Activated CD4-positive, alpha-beta memory T cell treated with anti-CD3 and anti-CD28 coated beads for 36 hours (primary cell): ENCODE measurements at regions of chr1 and their contacts with region 1.

Region 1: GRCh38 chr1:85576642-85577418 is 3.7 kb upstream of the CCN1 start:
- DNase-seq: peak; percentile 72
- H3K4me3 Mint-ChIP-seq: peak overlapping the region; percentile 60
- H3K27ac Mint-ChIP-seq: no peak overlapping the region
- H3K4me1 Mint-ChIP-seq: peaks cover 33% of the 10 kb centered on the region
- H3K27me3 Mint-ChIP-seq: peaks cover 66% of the 10 kb centered on the region

Region 2: GRCh38 chr1:85464497-85465098 is 112.2 kb before region 1 on chr1:
- CTCF ChIA-PET with region 1: interaction called, 3 read pairs
- POLR2A ChIA-PET with region 1: no interaction called
- intact Hi-C with region 1: loop called (anchors 5 kb)
- DNase-seq: peak; percentile 40
- H3K4me3 Mint-ChIP-seq: peak overlapping the region; percentile 0
- H3K27ac Mint-ChIP-seq: no peak overlapping the region
- H3K4me1 Mint-ChIP-seq: peaks cover 4% of the 10 kb centered on the region
- H3K27me3 Mint-ChIP-seq: peaks cover 40% of the 10 kb centered on the region

Region 3: DNA sequence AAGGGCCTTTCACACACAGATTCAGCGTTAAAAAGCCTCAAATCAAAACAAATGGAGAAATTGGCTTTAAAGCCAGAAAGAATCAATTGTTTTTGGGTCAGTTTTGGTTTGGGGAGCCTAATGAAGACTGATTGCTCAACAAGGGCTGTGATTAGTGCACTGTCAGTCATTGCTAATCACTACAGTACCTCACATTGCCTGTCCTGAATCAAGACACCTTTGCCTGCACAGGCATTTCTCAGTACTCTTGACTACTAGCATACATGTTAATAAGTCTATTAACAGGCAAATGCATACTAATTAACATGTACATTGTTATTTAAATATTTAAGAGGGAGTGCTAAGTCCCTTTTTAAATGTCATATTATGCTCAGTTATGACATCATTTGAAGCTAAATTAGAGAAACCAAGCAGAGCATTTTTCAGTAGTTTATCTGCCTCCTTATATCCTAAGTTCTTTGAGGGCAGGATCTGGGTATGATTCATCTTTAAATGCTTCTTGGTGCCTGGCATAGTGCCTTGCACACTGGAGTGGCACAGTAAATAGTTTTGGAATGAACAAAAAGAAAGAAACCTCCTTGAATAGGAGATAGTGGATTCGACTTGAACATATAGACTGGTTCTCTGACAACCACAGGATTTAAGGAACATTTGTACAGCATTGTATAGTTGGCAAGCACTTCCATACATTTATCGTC is 22.1 kb before region 1 on chr1:
- CTCF ChIA-PET with region 1: no interaction called
- POLR2A ChIA-PET with region 1: no interaction called
- intact Hi-C with region 1: no loop called
- DNase-seq: no peak
- H3K4me3 Mint-ChIP-seq: no peak overlapping the region
- H3K27ac Mint-ChIP-seq: no peak overlapping the region
- H3K4me1 Mint-ChIP-seq: no peaks in the 10 kb centered on the region
- H3K27me3 Mint-ChIP-seq: peaks cover 12% of the 10 kb centered on the region

Region 4: GRCh38 chr1:85607126-85607912 is 30.5 kb after region 1 on chr1:
- CTCF ChIA-PET with region 1: no interaction called
- POLR2A ChIA-PET with region 1: no interaction called
- intact Hi-C with region 1: no loop called
- DNase-seq: no peak
- H3K4me3 Mint-ChIP-seq: no peak overlapping the region
- H3K27ac Mint-ChIP-seq: no peak overlapping the region
- H3K4me1 Mint-ChIP-seq: no peaks in the 10 kb centered on the region
- H3K27me3 Mint-ChIP-seq: no peaks in the 10 kb centered on the region

Region 5: DNA sequence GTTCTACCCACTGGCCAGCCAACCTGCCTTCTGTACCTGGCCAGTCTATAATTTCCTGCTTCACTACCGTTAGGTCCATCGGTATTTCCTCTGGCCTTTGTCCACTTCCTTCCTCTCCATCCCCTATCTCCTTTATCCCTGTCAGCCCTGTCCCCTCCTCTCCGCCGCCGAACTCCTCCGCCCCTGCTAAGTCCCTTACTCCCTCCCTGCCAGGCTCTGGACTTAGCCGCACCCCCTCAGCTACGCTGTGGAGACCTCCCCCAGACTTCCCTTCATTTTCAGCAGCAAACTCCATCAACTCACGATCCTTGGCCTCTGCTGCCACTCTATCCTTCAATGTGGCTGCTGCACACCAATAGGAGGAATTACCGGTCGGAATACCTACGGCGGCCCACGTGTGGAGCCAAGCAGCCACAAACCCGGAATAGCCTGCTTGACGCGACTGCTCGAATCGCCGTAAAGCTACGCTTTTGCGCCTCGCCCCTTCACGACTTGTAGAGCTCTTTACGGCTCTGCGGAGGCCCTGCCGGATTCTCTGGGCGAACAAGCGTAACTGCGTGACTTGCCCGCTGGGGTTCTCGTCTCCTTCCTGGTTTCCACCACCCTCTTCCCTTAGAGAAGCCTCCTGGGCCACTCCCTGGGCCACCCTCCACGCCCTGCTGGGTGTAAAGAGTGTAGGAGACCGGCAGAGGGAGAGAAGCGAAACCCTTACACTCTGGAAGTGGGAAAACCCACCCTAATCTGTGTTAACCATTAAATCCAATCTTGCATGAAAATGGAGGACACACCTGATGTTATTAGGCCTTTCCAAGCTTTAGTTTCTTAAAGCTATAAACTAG is 131.4 kb after region 1 on chr1 and contains the start of gene ZNHIT6:
- CTCF ChIA-PET with region 1: no interaction called
- POLR2A ChIA-PET with region 1: no interaction called
- intact Hi-C with region 1: loop called (anchors 5 kb)
- DNase-seq: peak; percentile 93
- H3K4me3 Mint-ChIP-seq: no peak within 1 kb of the TSS
- H3K27ac Mint-ChIP-seq: no peak within 1 kb of the TSS
- H3K4me1 Mint-ChIP-seq: peaks cover 23% of the 10 kb centered on the region
- H3K27me3 Mint-ChIP-seq: no peaks in the 10 kb centered on the region
- total RNA-seq, gene ZNHIT6: 18.7 TPM